ACHN (cell line): ENCODE measurements at regions of chr1 and their contacts with region 1.

Region 1: DNA sequence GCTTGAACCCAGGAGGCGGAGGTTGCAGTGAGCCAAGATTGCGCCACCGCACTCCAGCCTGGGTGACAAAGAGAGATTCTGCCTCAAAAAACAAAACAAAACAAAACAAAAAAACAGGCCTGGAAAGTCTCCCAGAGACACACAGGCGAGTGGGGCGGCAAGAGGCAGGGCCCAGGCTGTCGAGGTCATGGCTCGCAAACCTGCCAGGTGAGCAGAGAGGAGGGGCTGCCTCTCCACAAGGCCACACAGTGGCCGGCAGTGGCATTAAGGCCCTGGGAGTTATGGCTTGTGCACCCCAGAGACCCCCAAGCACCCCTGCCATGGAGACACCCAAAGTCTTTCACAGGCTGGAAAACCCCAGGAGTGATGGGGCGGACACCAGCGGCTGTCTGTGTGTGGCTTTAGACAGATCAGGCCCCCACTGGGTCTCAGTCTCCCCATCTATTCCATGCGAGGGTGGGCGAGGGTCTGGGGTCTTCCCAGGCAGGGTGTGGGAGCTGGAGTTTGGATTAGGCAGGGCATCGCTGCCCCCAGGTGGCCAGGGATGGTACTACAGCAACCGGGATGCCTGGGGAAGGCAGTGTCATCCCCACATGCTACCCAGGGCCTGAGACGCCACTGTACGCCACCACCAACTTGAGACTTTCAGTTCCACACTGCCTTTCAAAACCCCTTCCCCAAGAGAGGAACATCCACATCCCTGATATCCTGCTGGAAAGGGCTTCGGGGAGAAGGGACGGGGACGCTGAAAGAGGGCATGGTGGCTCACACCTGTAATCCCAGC is 7.3 kb upstream of the CTRC start:
- DNase-seq: no peak

Region 2: DNA sequence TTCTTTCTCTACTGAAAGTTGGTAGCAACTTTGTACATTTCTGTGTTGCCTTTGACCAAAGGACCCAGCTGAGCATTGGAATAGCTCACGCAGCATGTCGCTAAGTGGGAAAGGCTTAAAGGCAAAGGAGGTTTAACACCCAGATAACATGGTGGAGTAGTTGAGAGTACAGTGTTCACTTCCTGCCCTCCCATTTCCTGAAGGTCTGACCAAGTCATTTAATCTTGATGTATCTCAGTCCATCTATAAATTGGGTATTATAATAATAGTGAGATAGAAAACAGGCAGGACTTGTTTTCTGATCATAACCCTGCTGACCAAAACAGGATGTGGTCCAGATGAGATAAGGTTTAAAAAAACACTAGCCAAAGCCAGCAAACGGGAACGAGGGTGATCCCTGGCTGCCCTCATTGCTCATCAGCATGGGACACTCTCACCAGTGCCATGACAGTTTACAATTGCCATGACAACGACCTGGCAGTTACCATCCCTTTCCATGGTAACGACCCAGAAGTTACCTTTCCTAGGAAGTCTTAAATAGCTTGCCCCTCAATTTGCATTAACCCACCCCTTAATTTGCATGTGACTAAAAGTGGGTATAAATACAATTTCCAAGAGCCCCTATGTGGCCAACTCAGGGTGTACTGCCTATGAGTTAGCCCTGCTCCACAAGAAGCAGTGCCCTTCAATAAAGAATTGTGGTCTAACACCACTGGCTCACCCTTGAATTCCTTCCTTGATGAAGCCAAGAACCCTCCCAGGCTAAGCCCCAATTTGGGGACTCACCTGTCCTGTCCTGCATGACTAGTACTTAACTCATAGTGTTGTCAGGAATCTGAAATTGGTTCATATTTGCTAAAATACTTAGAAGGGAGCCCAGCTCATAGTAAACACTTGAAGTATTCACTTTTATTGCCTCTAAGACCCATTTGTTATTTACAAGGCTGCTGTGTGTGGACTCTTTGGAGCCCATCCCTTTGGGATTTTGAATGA is 212.4 kb before region 1 on chr1:
- in situ Hi-C with region 1: no loop called
- DNase-seq: no peak

Region 3: GRCh38 chr1:15323351-15323988 is 107.5 kb before region 1 on chr1:
- in situ Hi-C with region 1: loop called (anchors 25 kb)
- DNase-seq: peak; percentile 69